A673 (cell line): ENCODE measurements at regions of chr1 and their contacts with region 1.

Region 1: GRCh38 chr1:226400519-226401354 is 7.2 kb downstream of the PARP1 start:
- DNase-seq: no peak
- H3K4me3 ChIP-seq: no peak overlapping the region
- H3K27ac ChIP-seq: no peak overlapping the region
- H3K4me1 ChIP-seq: peaks cover 34% of the 10 kb centered on the region
- H3K27me3 ChIP-seq: no peaks in the 10 kb centered on the region
- CTCF ChIP-seq: no peak

Region 2: GRCh38 chr1:226186124-226187018 is 214.4 kb before region 1 on chr1 and contains the start of gene ACBD3:
- CTCF ChIA-PET with region 1: no interaction called
- POLR2A ChIA-PET with region 1: interaction called, 11 read pairs
- intact Hi-C with region 1: no loop called
- DNase-seq: peak; percentile 91
- H3K4me3 ChIP-seq: peak within 1 kb of the TSS; percentile 88
- H3K27ac ChIP-seq: peak within 1 kb of the TSS; percentile 82
- H3K4me1 ChIP-seq: peaks cover 10% of the 10 kb centered on the region
- H3K27me3 ChIP-seq: no peaks in the 10 kb centered on the region
- CTCF ChIP-seq: no peak
- total RNA-seq, gene ACBD3: 30.5 and 33.4 TPM in 2 replicates